ENCODE measurements at regions of chr10 and their contacts with region 1.

Region 1: GRCh38 chr10:73252445-73253224 is at the start of gene MRPS16:
- DNase-seq: peak; percentile 85 to 97 (median 90)
- ATAC-seq: peak; percentile 87
- H3K4me3 ChIP-seq: peak within 1 kb of the TSS; percentile 93
- H3K4me3 Mint-ChIP-seq: peak within 1 kb of the TSS; percentile 96
- H3K27ac ChIP-seq: peak within 1 kb of the TSS; percentile 78 to 91
- H3K27ac Mint-ChIP-seq: peak within 1 kb of the TSS; percentile 94
- H3K4me1 ChIP-seq: peaks cover 23% of the 10 kb centered on the region
- H3K4me1 Mint-ChIP-seq: peaks cover 40% of the 10 kb centered on the region
- H3K27me3 ChIP-seq: no peaks in the 10 kb centered on the region
- H3K27me3 Mint-ChIP-seq: no peaks in the 10 kb centered on the region
- CTCF ChIP-seq: no peak
- total RNA-seq, gene MRPS16: 28.3 to 31.9 TPM

Region 2: GRCh38 chr10:72692057-72692910 is 560.4 kb before region 1 on chr10 and contains the start of gene MCU:
- CTCF ChIA-PET with region 1: no interaction called
- POLR2A ChIA-PET with region 1: no interaction called
- intact Hi-C with region 1: loop called in 1 of 2 experiments (anchors 5 kb)
- DNase-seq: peak; percentile 86 to 96 (median 92)
- ATAC-seq: peak; percentile 96
- H3K4me3 ChIP-seq: peak within 1 kb of the TSS; percentile 79
- H3K4me3 Mint-ChIP-seq: peak within 1 kb of the TSS; percentile 91
- H3K27ac ChIP-seq: peak within 1 kb of the TSS in 1 of 2 donors; percentile 24
- H3K27ac Mint-ChIP-seq: peak within 1 kb of the TSS; percentile 41
- H3K4me1 ChIP-seq: peaks cover 10% of the 10 kb centered on the region
- H3K4me1 Mint-ChIP-seq: peaks cover 43% of the 10 kb centered on the region
- H3K27me3 ChIP-seq: no peaks in the 10 kb centered on the region
- H3K27me3 Mint-ChIP-seq: no peaks in the 10 kb centered on the region
- CTCF ChIP-seq: no peak
- total RNA-seq, gene MCU: 10.3 to 12.0 TPM

Region 3: DNA sequence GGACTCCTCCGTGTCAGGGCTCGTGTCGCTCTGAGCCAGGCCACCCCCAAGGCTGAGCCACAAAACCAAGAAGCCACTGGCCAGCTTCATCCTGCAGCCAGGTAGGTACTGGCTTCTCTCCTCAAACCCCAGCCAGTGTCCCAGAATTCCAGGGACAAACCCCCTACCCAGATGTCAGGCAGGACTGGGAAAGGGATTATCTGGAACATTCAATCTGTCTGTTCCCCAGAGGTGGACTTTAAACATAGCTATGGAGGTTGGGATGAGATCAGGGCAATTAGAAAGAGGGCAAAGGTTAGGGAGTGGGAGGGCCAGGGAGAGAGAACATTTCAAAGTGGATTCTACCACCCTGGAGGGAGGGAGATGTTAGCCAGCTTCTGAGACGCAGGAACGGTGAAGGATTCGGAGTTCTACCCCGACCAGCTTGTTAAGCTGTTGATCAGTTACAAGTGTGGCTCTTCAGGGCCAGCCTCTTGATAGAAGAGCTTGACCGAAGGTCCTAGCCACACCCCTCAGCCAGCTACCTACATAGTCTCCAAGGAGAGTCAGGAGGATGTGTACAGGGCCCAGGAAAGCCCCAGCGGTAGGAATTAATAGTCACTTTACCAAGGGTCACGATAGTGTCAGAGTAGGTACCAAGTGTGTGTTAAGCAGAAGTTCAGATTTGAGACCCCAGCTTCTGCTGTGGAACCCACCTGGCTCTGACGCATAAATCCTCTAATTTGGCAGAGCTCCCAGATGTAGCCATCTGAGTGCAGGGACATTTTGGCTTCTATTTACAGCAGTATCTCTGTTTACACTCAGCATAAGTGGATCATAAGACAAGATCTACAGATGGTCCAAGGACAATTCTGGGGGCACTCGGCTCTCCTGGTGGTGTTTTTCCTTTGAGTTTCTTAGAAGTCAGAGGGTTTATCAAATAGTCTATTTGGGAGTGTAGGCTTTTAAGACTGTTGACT is 297.8 kb before region 1 on chr10 and contains the start of gene PLA2G12B:
- CTCF ChIA-PET with region 1: no interaction called
- POLR2A ChIA-PET with region 1: no interaction called
- intact Hi-C with region 1: no loop called
- DNase-seq: no peak
- ATAC-seq: no peak
- H3K4me3 ChIP-seq: no peak within 1 kb of the TSS
- H3K4me3 Mint-ChIP-seq: no peak within 1 kb of the TSS
- H3K27ac ChIP-seq: no peak within 1 kb of the TSS
- H3K27ac Mint-ChIP-seq: no peak within 1 kb of the TSS
- H3K4me1 ChIP-seq: no peaks in the 10 kb centered on the region
- H3K4me1 Mint-ChIP-seq: no peaks in the 10 kb centered on the region
- H3K27me3 ChIP-seq: peaks cover 0 to 2% of the 10 kb centered on the region in 2 experiments
- H3K27me3 Mint-ChIP-seq: peaks cover 21% of the 10 kb centered on the region
- CTCF ChIP-seq: no peak
- total RNA-seq, gene PLA2G12B: not detected

Region 4: DNA sequence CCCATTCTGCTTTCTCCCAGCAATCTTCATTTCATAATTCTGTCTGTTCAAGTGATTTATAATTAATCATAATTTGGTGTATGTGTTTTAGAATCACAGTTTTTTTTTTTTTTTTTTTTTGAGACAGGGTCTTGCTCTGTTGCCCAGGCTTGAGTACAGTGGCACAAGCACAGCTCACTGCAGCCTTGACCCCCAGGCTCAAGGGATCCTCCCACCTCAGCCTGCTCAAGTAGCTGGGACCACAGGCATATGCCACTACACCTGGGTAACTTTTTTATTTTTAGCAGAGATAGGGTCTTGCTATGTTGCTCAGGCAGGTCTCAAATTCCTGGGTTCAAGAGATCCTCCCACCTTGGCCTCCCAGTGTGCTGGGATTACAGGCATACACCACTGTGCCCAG is 248.8 kb before region 1 on chr10:
- CTCF ChIA-PET with region 1: no interaction called
- POLR2A ChIA-PET with region 1: no interaction called
- intact Hi-C with region 1: no loop called
- DNase-seq: no peak
- ATAC-seq: no peak
- H3K4me3 ChIP-seq: no peak overlapping the region
- H3K4me3 Mint-ChIP-seq: no peak overlapping the region
- H3K27ac ChIP-seq: no peak overlapping the region
- H3K27ac Mint-ChIP-seq: no peak overlapping the region
- H3K4me1 ChIP-seq: no peaks in the 10 kb centered on the region
- H3K4me1 Mint-ChIP-seq: no peaks in the 10 kb centered on the region
- H3K27me3 ChIP-seq: no peaks in the 10 kb centered on the region
- H3K27me3 Mint-ChIP-seq: no peaks in the 10 kb centered on the region
- CTCF ChIP-seq: no peak

Region 5: DNA sequence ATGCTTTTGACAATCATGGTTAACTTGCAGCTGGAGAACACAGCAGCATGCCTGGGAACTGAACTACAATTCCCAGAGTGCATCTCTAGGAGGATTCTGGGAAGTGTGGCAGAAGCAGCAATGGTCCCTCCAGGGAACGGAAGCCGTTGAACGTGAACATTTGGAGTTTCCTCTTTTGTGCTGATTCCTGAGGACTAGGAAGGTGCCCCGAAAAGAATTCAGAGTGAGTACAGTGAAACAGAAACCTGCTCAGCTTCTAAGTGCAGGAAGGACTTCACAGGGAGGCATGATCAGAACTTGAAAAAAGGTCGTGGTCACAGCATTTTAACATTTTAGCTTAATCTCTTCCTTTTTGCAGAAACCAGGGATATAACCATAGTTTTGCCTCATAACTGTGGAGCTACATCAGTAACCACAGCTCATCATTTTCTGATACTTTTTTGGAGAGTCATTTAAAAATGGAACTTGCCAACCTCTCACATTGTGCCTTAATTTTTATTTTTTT is 142.2 kb before region 1 on chr10 and contains the start of gene NUDT13:
- CTCF ChIA-PET with region 1: no interaction called
- POLR2A ChIA-PET with region 1: no interaction called
- intact Hi-C with region 1: loop called in 1 of 2 experiments (anchors 5 kb)
- DNase-seq: peak; percentile 9 to 83 (median 34)
- ATAC-seq: peak; percentile 91
- H3K4me3 ChIP-seq: peak within 1 kb of the TSS; percentile 46
- H3K4me3 Mint-ChIP-seq: peak within 1 kb of the TSS; percentile 89
- H3K27ac ChIP-seq: peak within 1 kb of the TSS in 1 of 2 donors; percentile 0
- H3K27ac Mint-ChIP-seq: peak within 1 kb of the TSS; percentile 71
- H3K4me1 ChIP-seq: peaks cover 6% of the 10 kb centered on the region
- H3K4me1 Mint-ChIP-seq: peaks cover 16% of the 10 kb centered on the region
- H3K27me3 ChIP-seq: no peaks in the 10 kb centered on the region
- H3K27me3 Mint-ChIP-seq: no peaks in the 10 kb centered on the region
- CTCF ChIP-seq: no peak
- total RNA-seq, gene NUDT13: 0.67 to 0.82 TPM

Region 6: GRCh38 chr10:73413528-73414229 is 161.0 kb after region 1 on chr10 and contains the start of gene ANXA7:
- CTCF ChIA-PET with region 1: no interaction called
- POLR2A ChIA-PET with region 1: interaction called, 7 read pairs
- intact Hi-C with region 1: loop called (anchors 2 to 5 kb)
- DNase-seq: peak; percentile 83 to 96 (median 92)
- ATAC-seq: peak; percentile 97
- H3K4me3 ChIP-seq: peak within 1 kb of the TSS; percentile 75
- H3K4me3 Mint-ChIP-seq: peak within 1 kb of the TSS; percentile 91
- H3K27ac ChIP-seq: peak within 1 kb of the TSS; percentile 86 to 98
- H3K27ac Mint-ChIP-seq: peak within 1 kb of the TSS; percentile 84
- H3K4me1 ChIP-seq: peaks cover 36% of the 10 kb centered on the region
- H3K4me1 Mint-ChIP-seq: peaks cover 57% of the 10 kb centered on the region
- H3K27me3 ChIP-seq: no peaks in the 10 kb centered on the region
- H3K27me3 Mint-ChIP-seq: no peaks in the 10 kb centered on the region
- CTCF ChIP-seq: peak; percentile 67
- total RNA-seq, gene ANXA7: 77.7 to 79.6 TPM

Region 7: DNA sequence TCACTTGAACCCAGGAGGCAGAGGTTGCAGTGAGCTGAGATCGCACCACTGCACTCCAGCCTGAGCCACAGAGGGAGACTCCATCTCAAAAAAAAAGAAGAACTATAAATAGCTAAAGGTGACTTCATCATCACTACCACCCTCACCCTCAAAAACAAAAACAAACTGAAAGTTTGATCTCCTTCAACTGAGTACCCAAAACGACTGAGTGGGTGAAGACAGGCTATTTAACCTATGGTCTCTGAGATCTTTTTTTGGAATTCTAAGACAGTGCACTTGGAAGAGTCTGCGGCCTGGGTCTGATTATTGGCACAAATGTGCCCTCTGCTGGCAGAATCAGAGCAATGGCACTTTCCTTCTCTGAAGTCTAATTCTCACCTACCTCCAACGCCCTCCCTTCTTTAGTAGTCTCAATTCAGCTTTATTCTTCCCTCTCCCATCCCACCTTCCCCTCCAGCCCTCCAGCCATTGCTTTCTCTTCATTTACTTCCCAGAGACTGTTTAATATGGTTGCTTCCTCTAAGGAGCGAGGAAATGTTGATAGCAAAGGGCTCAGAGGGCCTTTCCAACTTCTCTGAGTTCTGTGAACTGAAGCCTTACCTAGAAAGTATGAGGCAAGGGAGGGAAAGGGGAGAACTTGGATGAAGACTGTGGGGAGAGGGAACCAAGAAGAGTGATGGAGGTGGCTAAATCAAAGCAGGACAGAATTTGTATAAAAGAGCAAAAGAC is 391.5 kb after region 1 on chr10:
- CTCF ChIA-PET with region 1: no interaction called
- POLR2A ChIA-PET with region 1: no interaction called
- intact Hi-C with region 1: loop called in 1 of 2 experiments (anchors 5 kb)
- DNase-seq: peak; percentile 23 to 81 (median 36)
- ATAC-seq: peak; percentile 81
- H3K4me3 ChIP-seq: no peak overlapping the region
- H3K4me3 Mint-ChIP-seq: peak overlapping the region; percentile 16
- H3K27ac ChIP-seq: no peak overlapping the region
- H3K27ac Mint-ChIP-seq: no peak overlapping the region
- H3K4me1 ChIP-seq: peaks cover 23% of the 10 kb centered on the region
- H3K4me1 Mint-ChIP-seq: peaks cover 5% of the 10 kb centered on the region
- H3K27me3 ChIP-seq: peaks cover 0 to 6% of the 10 kb centered on the region in 2 experiments
- H3K27me3 Mint-ChIP-seq: peaks cover 17% of the 10 kb centered on the region
- CTCF ChIP-seq: peak; percentile 96